ENCODE measurements at regions of chr2 and their contacts with region 1.

Region 1: GRCh38 chr2:160384791-160385190 is 108.8 kb downstream of the RBMS1 start:
- DNase-seq: no peak
- H3K4me3 ChIP-seq: no peak overlapping the region
- H3K27me3 ChIP-seq: no peaks in the 10 kb centered on the region
- CTCF ChIP-seq: no peak

Region 2: GRCh38 chr2:160096409-160096808 is 288.4 kb before region 1 on chr2:
- CTCF ChIA-PET with region 1: no interaction called
- POLR2A ChIA-PET with region 1: interaction called, 22 read pairs
- DNase-seq: no peak
- H3K4me3 ChIP-seq: no peak overlapping the region
- H3K27me3 ChIP-seq: no peaks in the 10 kb centered on the region
- CTCF ChIP-seq: no peak